ENCODE measurements at regions of chr1 and their contacts with region 1.

Region 1: DNA sequence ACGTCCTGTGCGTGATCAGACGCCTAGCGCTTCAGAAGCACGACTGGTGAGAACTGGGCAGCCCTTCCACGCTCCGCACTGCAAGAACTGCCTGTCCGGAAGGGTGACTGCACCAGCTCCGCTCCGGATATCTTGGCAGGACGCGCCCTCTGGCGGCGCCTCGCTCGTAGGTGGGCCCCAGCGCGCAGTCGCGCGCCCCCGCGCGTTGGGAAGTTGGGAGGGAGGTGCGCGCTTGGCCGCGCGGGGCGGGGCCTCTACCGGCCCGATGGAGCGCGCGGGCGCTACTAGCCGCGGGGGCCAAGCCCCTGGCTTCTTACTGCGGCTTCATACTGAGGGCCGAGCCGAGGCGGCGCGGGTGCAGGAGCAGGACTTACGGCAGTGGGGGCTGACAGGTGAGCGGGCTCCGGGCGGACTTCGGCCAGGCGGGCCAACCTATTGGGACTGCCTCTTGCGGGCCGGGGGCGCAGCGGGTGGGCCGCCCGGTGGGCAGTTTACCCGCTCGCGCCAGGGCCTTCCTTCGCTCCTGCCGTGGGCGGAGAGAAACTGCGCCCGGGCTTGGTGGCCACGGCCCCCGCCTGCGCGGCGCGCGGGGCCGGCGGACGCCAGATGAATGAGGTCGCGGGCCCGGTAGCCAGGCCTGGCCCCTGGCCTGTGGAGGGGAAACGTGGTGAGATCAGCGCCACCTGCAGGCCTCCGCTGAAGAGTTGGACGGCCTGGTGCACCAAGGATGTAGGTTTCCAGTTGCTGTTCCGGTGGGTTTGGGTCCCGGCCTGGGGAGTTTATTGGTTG is at the start of gene CHD1L:
- DNase-seq: peak; percentile 91 to 95
- ATAC-seq: peak; percentile 89
- H3K4me3 ChIP-seq: peak within 1 kb of the TSS; percentile 81 to 89 (median 84)
- H3K27ac ChIP-seq: peak within 1 kb of the TSS; percentile 93 to 97 (median 95)
- H3K4me1 ChIP-seq: peaks cover 19 to 25% of the 10 kb centered on the region in 2 donors
- H3K27me3 ChIP-seq: no peaks in the 10 kb centered on the region
- CTCF ChIP-seq: peak; percentile 79 to 90 (median 87)
- POLR2A ChIP-seq: peak; percentile 62 to 76
- total RNA-seq, gene CHD1L: 9.0 to 10.3 (median 9.6) TPM

Region 2: GRCh38 chr1:147084273-147085096 is 158.1 kb before region 1 on chr1:
- in situ Hi-C with region 1: no loop called
- intact Hi-C with region 1: loop called (anchors 10 kb)
- DNase-seq: peak; percentile 25 to 42
- ATAC-seq: peak; percentile 56 to 80
- H3K4me3 ChIP-seq: peak overlapping the region; percentile 41 to 69 (median 56)
- H3K27ac ChIP-seq: peak overlapping the region in 2 of 4 donors; percentile 31 to 37
- H3K4me1 ChIP-seq: peaks cover 0 to 20% of the 10 kb centered on the region in 2 donors
- H3K27me3 ChIP-seq: peaks cover 29 to 68% (median 51%) of the 10 kb centered on the region in 3 donors
- CTCF ChIP-seq: no peak
- POLR2A ChIP-seq: peak in 1 of 2 donors; percentile 35

Region 3: GRCh38 chr1:147172168-147172992 is 70.3 kb before region 1 on chr1 and contains the start of gene PRKAB2:
- in situ Hi-C with region 1: loop called (anchors 5 to 10 kb)
- intact Hi-C with region 1: loop called (anchors 1 kb)
- DNase-seq: peak; percentile 93 to 96
- ATAC-seq: peak; percentile 88 to 92
- H3K4me3 ChIP-seq: peak within 1 kb of the TSS; percentile 77 to 97 (median 94)
- H3K27ac ChIP-seq: peak within 1 kb of the TSS; percentile 85 to 97 (median 92)
- H3K4me1 ChIP-seq: peaks cover 35 to 46% of the 10 kb centered on the region in 2 donors
- H3K27me3 ChIP-seq: no peaks in the 10 kb centered on the region
- CTCF ChIP-seq: peak; percentile 86 to 98 (median 96)
- POLR2A ChIP-seq: peak; percentile 73 to 74
- total RNA-seq, gene PRKAB2: 65.2 to 107 (median 80.2) TPM

Measured in gastrocnemius medialis (tissue), 4 donors.